Caco-2 (cell line): ENCODE measurements at regions of chr13 and their contacts with region 1.

Region 1: DNA sequence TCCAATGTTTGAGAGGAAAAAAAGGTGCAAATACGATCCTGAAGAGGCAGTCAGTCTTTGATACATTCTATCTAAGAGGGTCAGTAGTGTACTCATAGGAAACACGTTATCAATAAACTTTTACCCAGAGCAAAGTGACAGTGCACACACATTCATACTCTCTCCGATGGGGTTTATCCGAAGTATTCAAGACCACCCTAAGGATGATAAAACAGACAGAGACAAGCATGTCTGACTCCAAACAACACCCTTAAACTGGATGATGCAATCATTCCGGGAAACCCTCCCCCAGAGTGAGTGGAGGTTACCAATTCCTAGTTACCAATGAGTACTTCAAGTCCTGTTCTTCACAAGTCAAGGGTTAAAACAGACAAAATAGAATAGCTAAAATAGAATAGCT is 79.1 kb downstream of the DNAJC3 start:
- DNase-seq: no peak
- H3K4me3 ChIP-seq: no peak overlapping the region
- H3K4me3 Mint-ChIP-seq: no peak overlapping the region
- H3K27ac Mint-ChIP-seq: no peak overlapping the region
- H3K4me1 ChIP-seq: no peaks in the 10 kb centered on the region
- H3K4me1 Mint-ChIP-seq: no peaks in the 10 kb centered on the region
- H3K27me3 ChIP-seq: no peaks in the 10 kb centered on the region
- H3K27me3 Mint-ChIP-seq: no peaks in the 10 kb centered on the region
- CTCF ChIP-seq: no peak

Region 2: DNA sequence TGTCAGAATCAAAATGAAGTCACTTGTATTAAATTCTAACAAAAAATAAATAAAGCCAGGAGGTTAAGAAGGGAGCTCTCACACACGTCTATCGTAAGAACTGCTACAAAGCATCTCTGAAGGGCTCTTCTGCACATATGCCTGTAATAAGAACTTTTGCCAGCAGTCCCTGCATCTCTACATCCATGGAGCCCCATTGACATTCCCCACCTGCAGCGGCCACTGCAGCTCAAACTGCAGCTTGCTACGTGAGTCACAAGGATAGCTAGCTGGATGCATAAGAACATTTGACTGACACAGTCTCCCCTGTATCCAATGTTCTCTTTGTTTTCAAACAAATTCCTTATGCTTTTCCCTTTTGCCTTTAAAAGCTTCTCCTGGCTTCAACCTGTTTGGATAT is 10.8 kb before region 1 on chr13:
- CTCF ChIA-PET with region 1: interaction called, 10 read pairs
- POLR2A ChIA-PET with region 1: no interaction called
- intact Hi-C with region 1: no loop called
- DNase-seq: no peak
- H3K4me3 ChIP-seq: no peak overlapping the region
- H3K4me3 Mint-ChIP-seq: no peak overlapping the region
- H3K27ac Mint-ChIP-seq: no peak overlapping the region
- H3K4me1 ChIP-seq: peaks cover 28% of the 10 kb centered on the region
- H3K4me1 Mint-ChIP-seq: peaks cover 29% of the 10 kb centered on the region
- H3K27me3 ChIP-seq: no peaks in the 10 kb centered on the region
- H3K27me3 Mint-ChIP-seq: no peaks in the 10 kb centered on the region
- CTCF ChIP-seq: no peak